Cardiac septum (tissue), 1 donor: ENCODE measurements at regions of chr3 and their contacts with region 1.

Region 1: DNA sequence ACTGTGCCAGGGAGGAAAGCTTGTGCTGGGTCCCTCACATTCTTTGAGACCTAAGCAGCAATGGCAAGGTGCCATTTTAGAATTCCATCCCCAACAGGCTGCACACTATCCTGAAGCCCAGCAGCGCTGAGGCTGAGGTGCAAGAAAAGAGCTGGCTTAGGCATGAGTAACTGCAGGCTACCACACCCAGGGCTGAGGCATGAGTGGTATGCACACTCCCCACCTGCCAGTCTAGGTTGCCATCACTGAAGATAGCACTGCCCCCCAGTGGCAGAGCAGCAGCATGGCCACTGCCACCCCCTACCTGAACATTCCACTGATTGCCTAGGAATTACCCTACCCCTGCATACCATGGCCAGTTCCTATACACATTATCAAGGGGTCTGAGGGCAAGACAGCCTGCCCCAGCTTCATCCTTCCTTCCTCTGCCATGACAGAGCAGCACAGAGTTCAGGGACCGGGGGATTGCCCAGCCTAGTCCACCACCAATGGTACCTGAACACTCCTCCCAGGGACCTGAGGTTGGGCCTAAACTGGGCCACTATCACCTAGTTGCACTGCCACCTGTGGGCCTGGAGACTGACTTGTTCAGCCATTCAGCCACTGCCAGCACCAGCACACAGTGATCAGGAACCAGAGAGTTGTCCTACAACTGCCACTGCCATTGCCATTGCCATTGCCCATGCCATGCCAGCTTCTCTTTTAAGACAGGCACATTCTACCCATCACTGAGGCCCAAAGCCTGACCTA is 129.8 kb downstream of the SATB1 start:
- DNase-seq: no peak

Region 2: DNA sequence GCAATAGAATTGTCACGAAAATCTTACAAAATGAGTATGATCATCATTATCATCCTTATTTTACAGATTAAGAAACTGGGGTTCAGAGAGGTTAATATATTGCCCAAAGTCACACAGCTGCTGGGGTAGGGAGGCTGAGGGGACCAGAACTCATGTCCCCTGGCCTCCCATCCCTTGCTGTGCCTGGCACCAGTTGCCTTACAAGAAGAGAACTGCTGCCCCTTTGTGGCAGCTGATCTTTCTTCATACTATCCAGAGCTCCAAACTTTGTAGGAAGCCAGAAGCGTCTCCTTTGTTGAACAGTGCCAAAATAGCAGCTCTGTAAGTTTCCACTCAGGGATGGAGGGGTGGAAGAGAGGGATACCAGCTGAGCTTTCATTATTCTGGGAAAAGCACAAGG is 316.1 kb before region 1 on chr3:
- intact Hi-C with region 1: loop called (anchors 10 kb)
- DNase-seq: no peak

Region 3: DNA sequence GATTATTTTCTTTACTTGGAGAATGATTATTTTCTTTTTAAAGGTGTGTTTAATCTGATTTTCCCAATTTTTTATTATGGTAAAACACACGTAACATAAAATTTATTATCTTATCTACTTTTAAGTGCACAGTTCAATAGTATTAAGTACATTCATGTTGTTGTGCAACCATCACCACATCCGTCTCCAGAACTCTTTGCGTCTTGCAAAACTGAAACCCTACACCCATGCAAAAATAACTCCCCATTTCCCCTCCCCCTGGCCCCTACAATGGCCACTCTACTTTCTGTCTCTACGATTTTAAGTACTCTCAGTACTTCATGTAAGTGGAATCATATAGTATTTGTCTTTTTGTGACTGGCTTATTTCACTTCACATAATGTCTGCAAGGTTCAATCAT is 100.9 kb before region 1 on chr3:
- intact Hi-C with region 1: no loop called
- DNase-seq: no peak

Region 4: DNA sequence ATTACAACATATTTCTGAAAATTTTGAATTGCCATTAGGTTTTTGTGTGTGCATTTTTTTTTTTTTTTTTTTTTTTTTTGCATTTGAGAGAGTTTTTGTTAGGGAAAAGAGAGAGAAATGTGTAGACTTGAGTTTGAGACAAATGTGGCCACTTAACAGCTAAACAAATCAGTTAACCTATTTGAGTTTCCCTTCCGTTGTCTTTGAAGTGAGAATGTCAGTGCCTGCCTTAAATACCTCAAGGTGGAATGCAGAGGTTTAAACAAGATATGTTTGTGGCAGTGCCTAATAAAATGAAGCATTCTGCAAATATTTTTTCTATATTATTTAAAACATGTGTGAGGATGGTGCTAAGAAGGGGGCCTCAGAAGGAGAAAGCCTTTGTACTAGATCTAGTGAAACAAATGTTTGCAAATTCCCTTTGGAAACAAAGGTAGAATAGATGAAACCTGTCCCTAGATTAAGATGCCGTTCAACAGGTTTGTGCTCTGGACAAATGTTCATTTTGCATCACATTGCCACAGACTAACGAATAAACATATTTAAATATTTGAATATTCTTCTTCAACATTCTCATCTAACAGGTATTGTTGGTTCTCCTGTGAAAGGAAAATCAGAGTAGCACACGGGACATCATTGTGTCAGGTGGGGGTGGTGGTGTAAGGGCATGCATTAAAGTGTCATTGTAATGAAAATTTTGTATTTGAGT is 49.1 kb after region 1 on chr3:
- intact Hi-C with region 1: no loop called
- DNase-seq: no peak